WTC11 (cell line): ENCODE measurements at regions of chr2 and their contacts with region 1.

Region 1: DNA sequence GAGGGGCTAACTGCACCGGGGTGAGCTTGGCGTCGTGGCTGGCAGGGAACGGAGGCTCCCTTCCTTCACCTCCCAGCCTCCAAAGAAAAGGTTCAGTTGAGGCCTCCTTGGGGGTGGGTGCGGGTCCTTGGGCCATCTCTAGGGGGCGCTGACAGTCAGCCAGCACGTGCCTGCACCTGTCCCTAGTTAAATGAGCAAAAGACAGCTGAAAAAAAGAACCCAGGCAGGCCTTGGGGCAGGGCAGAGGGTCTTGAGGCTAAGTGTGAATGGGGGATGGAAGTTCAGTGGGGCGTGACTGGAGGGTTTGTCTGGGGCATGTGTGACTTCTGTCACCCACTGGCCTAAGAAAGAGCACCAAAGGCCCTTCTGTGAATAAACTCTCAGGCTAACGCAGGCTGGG is 56.4 kb downstream of the ZFP36L2 start:
- DNase-seq: peak; percentile 77
- ATAC-seq: peak; percentile 43
- H3K4me3 Mint-ChIP-seq: no peak overlapping the region
- H3K27ac Mint-ChIP-seq: no peak overlapping the region
- H3K4me1 Mint-ChIP-seq: peaks cover 33% of the 10 kb centered on the region
- H3K27me3 Mint-ChIP-seq: peaks cover 6% of the 10 kb centered on the region
- CTCF ChIP-seq: peak; percentile 92

Region 2: GRCh38 chr2:43186679-43187374 is 16.8 kb after region 1 on chr2:
- CTCF ChIA-PET with region 1: interaction called, 16 read pairs
- POLR2A ChIA-PET with region 1: no interaction called
- DNase-seq: peak; percentile 45
- ATAC-seq: peak; percentile 75
- H3K4me3 Mint-ChIP-seq: no peak overlapping the region
- H3K27ac Mint-ChIP-seq: peak overlapping the region; percentile 51
- H3K4me1 Mint-ChIP-seq: peaks cover 55% of the 10 kb centered on the region
- H3K27me3 Mint-ChIP-seq: no peaks in the 10 kb centered on the region
- CTCF ChIP-seq: no peak

Region 3: DNA sequence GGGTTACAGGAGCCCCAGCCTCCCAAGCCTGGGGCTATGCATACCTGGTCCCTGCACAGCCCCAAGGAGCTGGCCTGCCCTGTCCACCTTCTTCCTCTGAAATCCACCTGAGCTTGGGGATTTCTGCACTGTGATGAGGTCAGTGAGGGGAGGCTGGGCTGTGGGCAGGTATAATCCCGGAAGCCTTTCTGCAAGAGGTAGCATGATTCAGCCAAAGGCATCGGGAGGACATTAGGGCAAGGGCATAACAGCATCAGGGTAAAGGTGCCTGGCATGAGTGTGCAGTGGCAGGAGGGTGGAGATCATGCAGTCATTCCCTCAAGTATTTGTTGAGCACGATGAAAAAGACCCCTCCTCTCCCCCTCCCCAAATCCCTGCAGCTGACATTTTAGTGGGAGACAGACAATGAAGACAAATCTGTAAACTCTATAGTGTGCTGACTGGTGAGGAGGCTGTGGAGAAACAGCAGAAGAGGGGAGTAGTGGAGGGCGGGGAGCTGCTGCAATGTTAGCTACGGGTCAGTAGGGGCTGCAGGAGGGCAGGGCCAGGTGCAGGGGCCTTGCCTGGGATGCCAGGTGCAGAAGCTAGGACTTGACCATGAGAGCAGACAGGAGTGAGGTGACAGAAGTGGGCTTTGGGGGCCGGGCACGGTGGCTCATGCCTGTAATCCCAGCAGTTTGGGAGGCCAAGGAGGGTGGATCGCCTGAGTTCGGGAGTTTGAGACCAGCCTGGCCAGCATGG is 37.7 kb after region 1 on chr2:
- CTCF ChIA-PET with region 1: interaction called, 37 read pairs
- POLR2A ChIA-PET with region 1: interaction called, 4 read pairs
- DNase-seq: peak; percentile 59
- ATAC-seq: peak; percentile 94
- H3K4me3 Mint-ChIP-seq: no peak overlapping the region
- H3K27ac Mint-ChIP-seq: peak overlapping the region; percentile 9; the same call in 1 of the 2 replicates
- H3K4me1 Mint-ChIP-seq: peaks cover 19% of the 10 kb centered on the region
- H3K27me3 Mint-ChIP-seq: no peaks in the 10 kb centered on the region
- CTCF ChIP-seq: no peak

Region 4: DNA sequence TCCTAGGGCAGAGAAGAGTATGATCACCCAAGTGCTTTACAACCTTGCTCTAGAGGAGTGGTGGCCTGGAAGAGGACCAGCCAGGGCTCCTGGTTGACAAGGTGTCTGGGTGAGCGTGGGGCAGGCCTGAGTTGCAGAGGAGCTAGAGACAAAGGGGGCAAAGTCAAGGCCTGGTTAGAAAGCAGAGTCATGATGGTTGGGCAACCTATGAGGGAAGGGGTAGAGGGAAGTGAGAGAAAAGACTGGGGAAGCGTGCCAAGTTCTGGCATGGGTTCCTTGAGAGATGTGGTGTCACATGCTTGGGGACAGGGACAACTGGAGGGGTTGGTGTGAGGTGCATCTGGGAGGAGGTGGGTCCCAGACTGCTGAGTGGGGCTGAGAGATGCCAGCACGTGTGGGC is 42.9 kb after region 1 on chr2:
- CTCF ChIA-PET with region 1: interaction called, 37 read pairs
- POLR2A ChIA-PET with region 1: interaction called, 4 read pairs
- DNase-seq: no peak
- ATAC-seq: no peak
- H3K4me3 Mint-ChIP-seq: no peak overlapping the region
- H3K27ac Mint-ChIP-seq: peak overlapping the region; percentile 92
- H3K4me1 Mint-ChIP-seq: peaks cover 52% of the 10 kb centered on the region
- H3K27me3 Mint-ChIP-seq: no peaks in the 10 kb centered on the region
- CTCF ChIP-seq: no peak

Region 5: DNA sequence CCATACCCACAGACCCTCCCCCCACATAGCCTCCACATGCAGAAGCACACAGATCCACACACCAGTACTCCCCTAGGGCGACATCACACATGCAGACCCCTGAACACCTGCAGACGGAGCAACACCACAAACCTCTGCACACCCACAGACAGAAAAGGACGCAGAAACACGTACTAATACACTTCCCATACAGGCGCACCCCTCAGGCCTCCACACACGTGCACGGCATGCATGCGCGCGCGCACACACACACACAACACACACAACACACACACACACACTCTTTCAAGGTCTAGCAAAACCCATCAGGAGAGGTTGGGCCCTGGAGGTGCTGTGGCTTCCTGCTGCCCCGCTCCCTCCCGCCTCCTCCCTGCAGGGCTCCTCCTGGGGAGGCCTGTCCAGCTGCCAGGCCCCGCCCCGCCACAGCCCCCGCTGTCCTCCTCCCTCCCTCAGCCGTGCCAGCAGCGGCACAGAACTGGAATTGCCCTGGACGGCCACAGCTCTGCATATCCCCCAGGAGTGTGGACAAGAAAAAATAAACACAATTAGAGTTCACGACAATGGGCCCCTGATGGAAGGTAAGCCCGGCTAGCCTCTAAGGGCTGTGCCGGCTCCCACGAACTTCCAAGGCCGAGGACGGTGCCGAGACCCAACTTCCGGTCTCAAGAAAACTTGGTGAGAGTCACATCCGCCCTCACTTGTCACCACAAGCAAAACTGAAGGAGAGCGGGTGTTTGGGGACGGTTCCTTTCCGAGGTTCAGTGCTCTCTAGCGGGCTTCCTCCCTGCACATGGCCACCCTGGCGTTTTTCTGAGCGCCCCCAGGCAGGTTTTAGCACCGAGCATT is 49.6 kb after region 1 on chr2:
- CTCF ChIA-PET with region 1: interaction called, 20 read pairs
- POLR2A ChIA-PET with region 1: interaction called, 5 read pairs
- DNase-seq: peak; percentile 77
- ATAC-seq: peak; percentile 6
- H3K4me3 Mint-ChIP-seq: peak overlapping the region; percentile 74
- H3K27ac Mint-ChIP-seq: peak overlapping the region; percentile 99
- H3K4me1 Mint-ChIP-seq: peaks cover 74% of the 10 kb centered on the region
- H3K27me3 Mint-ChIP-seq: no peaks in the 10 kb centered on the region
- CTCF ChIP-seq: no peak